ENCODE measurements at regions of chr2 and their contacts with region 1.

Region 1: DNA sequence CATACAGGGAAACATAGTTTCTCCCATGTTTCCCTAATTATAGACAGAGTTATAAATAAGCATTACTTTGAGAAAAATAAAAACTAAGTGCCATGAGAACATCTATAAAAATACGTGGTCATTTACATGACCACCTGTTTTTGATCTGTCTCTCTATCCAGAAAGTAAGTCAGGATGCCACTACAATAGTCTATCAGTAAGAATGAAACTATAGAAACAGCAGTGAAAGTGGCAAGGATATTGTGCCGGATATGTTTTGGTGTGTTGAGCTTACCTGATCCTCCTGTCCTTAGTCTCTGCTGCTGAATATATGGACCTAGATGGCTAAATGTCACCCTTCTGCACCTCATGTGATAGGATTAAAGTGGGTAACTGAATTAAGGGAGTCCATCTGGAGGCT is 512.4 kb downstream of the LRP1B start:
- DNase-seq: no peak
- ATAC-seq: no peak

Region 2: DNA sequence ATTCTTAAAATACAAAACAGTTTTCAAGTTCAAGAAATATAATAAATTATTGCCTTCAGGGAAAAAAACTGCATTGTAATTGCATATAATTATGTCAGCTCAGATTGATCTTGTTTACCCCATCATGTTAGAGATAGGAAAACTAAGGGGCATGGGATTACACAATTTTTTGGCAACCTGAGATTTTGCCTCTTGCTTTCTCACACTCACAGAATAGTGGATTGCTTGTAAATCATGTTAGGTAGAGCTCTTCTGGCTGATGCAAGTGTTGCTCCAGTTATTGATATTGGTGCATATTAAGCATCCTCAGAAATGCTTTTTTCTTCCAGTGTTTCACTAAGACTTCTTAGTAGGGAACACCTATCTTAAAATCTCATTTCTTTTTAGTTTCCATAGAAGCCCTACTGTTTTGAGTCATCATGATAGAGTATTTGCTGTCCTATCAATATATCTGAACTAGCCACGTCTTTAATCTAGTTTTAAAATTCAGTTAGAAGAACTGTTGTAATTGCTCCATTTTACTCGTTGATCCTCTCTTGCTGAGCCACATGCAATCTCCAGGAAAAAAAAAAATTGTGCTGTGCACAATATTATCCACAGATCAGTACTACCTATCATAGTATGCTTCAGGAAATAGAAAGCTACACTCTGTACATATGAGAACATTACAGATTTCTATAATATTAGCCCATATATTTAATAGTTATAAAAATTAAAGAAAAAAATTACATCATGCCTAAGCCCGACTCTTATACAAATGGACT is 119.2 kb after region 1 on chr2:
- intact Hi-C with region 1: loop called (anchors 5 kb)
- DNase-seq: no peak
- ATAC-seq: no peak

Region 3: DNA sequence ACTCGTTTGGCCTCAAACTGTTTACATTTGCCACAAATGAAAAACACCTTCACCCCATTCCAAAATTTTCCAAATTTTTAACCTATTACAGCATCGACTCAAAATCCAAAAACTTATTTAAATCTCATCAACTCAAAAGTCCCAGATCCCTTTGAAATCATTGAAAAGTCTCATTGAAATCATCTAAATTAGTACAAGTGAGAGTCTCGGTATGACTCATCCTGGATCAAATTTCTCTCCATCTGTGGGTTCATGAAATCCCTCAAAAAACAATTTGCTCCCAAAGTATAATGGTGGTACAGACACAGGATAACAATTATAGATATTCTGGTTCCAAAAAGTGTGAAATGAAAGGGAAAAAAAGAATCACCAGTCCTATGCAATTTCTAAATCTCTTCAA is 447.2 kb after region 1 on chr2:
- intact Hi-C with region 1: no loop called
- DNase-seq: no peak
- ATAC-seq: no peak

Measured in sciatic nerve (tissue), 2 donors.